ENCODE measurements at regions of chr12 and their contacts with region 1.

Region 1: GRCh38 chr12:65673732-65674131 is 150.6 kb upstream of the HMGA2 start:
- DNase-seq: no peak
- H3K4me3 ChIP-seq: no peak overlapping the region
- CTCF ChIP-seq: no peak

Region 2: GRCh38 chr12:65556681-65557437 is 116.9 kb before region 1 on chr12:
- CTCF ChIA-PET with region 1: interaction called, 11 read pairs
- POLR2A ChIA-PET with region 1: no interaction called
- DNase-seq: no peak
- H3K4me3 ChIP-seq: no peak overlapping the region
- CTCF ChIP-seq: peak; percentile 93

Region 3: GRCh38 chr12:65685514-65685913 is 11.8 kb after region 1 on chr12:
- CTCF ChIA-PET with region 1: interaction called, 13 read pairs
- POLR2A ChIA-PET with region 1: no interaction called
- DNase-seq: no peak
- H3K4me3 ChIP-seq: no peak overlapping the region
- CTCF ChIP-seq: peak; percentile 28